ENCODE measurements at regions of chr2 and their contacts with region 1.

Region 1: GRCh38 chr2:217934321-217935131 is 68.3 kb downstream of the TNS1 start:
- DNase-seq: no peak
- H3K4me3 ChIP-seq: no peak overlapping the region
- H3K27ac ChIP-seq: 0 out of 2 replicates have a peak overlapping the region, but pooled peaks have one; percentile 33
- H3K4me1 ChIP-seq: peaks cover 11 to 37% (median 23%) of the 10 kb centered on the region in 4 experiments
- H3K27me3 ChIP-seq: no peaks in the 10 kb centered on the region; a peak in 1 of 7 replicates
- CTCF ChIP-seq: no peak
- EP300 ChIP-seq: no peak
- POLR2A ChIP-seq: no peak
- RAD21 ChIP-seq: no peak

Region 2: GRCh38 chr2:217918308-217919024 is 16.1 kb before region 1 on chr2:
- CTCF ChIA-PET with region 1: interaction called, 82 read pairs
- POLR2A ChIA-PET with region 1: interaction called, 8 read pairs
- DNase-seq: no peak
- H3K4me3 ChIP-seq: no peak overlapping the region
- H3K27ac ChIP-seq: no peak overlapping the region
- H3K4me1 ChIP-seq: peaks cover 9 to 48% (median 33%) of the 10 kb centered on the region in 4 experiments
- H3K27me3 ChIP-seq: peaks cover 0 to 4% (median 0%) of the 10 kb centered on the region in 4 experiments; a peak in 3 of 7 replicates
- CTCF ChIP-seq: peak; percentile 53 to 63 (median 55)
- EP300 ChIP-seq: no peak
- POLR2A ChIP-seq: no peak
- RAD21 ChIP-seq: peak in 1 of 2 experiments; percentile 45; a peak in 3 of 4 replicates

Region 3: DNA sequence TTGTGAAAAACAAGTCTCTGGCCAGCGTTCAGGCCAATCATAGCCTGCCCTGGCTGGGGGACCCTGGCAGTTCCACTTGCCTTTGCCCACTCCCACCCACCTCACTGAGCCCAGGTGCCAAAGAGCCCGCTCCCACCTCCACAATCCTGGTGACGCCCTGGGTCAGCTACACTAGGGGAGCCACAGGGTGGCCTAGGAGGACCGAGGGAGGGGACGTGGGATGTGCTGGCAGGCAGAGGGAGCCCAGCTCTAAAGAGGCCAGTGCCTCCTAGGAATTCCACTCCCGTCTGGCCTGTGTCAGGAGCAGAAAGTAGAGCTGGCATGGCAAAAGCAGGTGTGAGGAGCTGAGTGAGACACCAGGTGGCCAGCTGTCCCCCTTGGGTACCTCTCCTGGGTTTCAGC is 19.0 kb after region 1 on chr2:
- CTCF ChIA-PET with region 1: interaction called, 83 read pairs
- POLR2A ChIA-PET with region 1: interaction called, 6 read pairs
- DNase-seq: no peak
- H3K4me3 ChIP-seq: no peak overlapping the region
- H3K27ac ChIP-seq: no peak overlapping the region
- H3K4me1 ChIP-seq: peaks cover 0 to 10% (median 3%) of the 10 kb centered on the region in 4 experiments; a peak in 6 of 7 replicates
- H3K27me3 ChIP-seq: peaks cover 0 to 3% (median 0%) of the 10 kb centered on the region in 4 experiments; a peak in 1 of 7 replicates
- CTCF ChIP-seq: no peak
- EP300 ChIP-seq: no peak
- POLR2A ChIP-seq: no peak
- RAD21 ChIP-seq: no peak

Region 4: GRCh38 chr2:217964275-217965161 is 30.0 kb after region 1 on chr2:
- CTCF ChIA-PET with region 1: interaction called, 16 read pairs
- POLR2A ChIA-PET with region 1: no interaction called
- DNase-seq: no peak
- H3K4me3 ChIP-seq: no peak overlapping the region
- H3K27ac ChIP-seq: no peak overlapping the region; the same call in 1 of the 2 replicates
- H3K4me1 ChIP-seq: peaks cover 0 to 13% (median 8%) of the 10 kb centered on the region in 4 experiments; a peak in 6 of 7 replicates
- H3K27me3 ChIP-seq: no peaks in the 10 kb centered on the region
- CTCF ChIP-seq: no peak
- EP300 ChIP-seq: no peak
- POLR2A ChIP-seq: no peak
- RAD21 ChIP-seq: no peak; a peak in 1 of 4 replicates

Region 5: DNA sequence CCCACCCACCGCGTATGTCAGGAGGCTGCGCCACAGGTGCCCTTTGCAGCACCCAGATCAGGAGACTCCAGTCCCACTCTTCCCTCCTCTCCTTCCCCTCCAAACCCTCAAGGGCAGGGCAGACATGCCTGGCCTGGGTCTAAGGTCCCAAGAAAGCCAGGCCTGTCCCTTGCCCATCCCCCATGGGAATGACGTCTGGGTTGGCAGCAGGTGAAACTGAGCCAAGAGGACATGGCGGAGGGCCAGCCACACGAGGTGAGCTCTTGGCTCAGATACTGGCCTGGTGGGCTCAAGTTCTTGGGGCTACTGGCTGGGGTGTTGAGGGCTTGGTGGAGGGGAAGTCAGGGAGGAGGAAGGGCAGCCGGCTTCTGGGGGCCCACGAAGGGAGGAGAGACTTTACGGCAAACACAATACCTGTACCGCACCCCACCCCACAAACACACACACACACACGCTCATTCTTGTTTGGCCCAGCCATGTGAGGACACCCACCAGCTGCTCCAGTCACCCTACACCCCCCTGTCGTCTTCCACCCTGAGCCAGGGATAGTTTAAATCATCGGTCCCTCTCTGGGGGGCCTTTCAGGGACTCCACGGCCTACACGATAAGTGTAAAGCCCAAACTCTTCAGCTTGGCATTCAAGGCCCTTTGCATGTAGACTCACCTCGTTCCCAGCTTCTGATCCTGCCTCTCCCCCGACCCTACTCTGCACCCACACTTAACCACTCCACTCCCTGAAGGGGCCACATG is 92.3 kb after region 1 on chr2:
- CTCF ChIA-PET with region 1: interaction called, 10 read pairs
- POLR2A ChIA-PET with region 1: no interaction called
- DNase-seq: peak in 1 of 2 experiments; percentile 44
- H3K4me3 ChIP-seq: no peak overlapping the region
- H3K27ac ChIP-seq: no peak overlapping the region
- H3K4me1 ChIP-seq: peaks cover 0 to 12% (median 3%) of the 10 kb centered on the region in 4 experiments; a peak in 6 of 7 replicates
- H3K27me3 ChIP-seq: no peaks in the 10 kb centered on the region; a peak in 1 of 7 replicates
- CTCF ChIP-seq: no peak
- EP300 ChIP-seq: no peak
- POLR2A ChIP-seq: no peak
- RAD21 ChIP-seq: no peak

Region 6: DNA sequence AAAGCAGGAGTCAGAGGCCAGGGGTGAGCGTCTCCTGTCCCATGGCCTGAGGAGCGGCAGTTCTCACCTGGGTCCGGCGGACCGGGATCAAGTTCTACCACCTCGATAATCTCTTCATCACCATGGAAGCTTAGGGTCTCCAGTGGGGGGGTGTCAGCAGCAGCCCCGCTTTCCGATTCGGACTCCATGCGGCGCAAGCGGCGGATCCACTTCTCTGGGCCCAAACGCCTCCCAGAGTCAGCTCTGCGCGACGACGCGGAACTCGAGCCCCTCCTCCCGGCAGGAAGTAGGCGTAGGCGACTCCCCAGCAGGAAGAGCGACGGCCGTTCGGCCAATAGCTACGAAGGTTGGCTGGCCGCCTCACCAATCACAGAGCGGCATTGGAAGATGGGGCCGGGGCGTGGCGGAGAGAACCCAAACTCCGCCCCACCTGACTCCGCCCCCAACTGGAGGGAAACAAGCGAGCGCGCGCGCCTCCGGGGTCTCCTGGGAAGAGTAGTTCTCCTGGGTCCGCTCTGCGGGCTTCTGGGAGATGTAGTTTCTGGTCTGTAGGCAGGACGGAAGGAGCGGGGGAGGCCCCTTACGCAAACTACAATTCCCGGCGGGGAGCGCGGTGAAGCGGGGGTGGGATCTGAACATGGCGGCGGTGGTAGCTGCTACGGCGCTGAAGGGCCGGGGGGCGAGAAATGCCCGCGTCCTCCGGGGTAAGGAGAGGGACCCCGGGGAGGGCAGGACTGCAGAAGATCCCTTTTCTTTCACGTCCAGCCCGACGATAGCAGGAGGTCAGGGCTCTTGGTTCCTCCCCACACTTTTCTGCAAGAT is 335.6 kb after region 1 on chr2 and contains the starts of genes AAMP and PNKD:
- CTCF ChIA-PET with region 1: no interaction called
- POLR2A ChIA-PET with region 1: no interaction called
- DNase-seq: peak; percentile 97 to 100
- H3K4me3 ChIP-seq: peak within 1 kb of the TSS; percentile 89 to 95 (median 92)
- H3K27ac ChIP-seq: peak within 1 kb of the TSS; percentile 28; the same call in 1 of the 2 replicates
- H3K4me1 ChIP-seq: peaks cover 0 to 7% (median 4%) of the 10 kb centered on the region in 4 experiments; a peak in 4 of 7 replicates
- H3K27me3 ChIP-seq: no peaks in the 10 kb centered on the region
- CTCF ChIP-seq: no peak
- EP300 ChIP-seq: no peak
- POLR2A ChIP-seq: peak in 1 of 2 experiments; percentile 82; a peak in 2 of 3 replicates
- RAD21 ChIP-seq: no peak
- total RNA-seq, gene AAMP: 119 and 125 TPM in 2 replicates
- total RNA-seq, gene PNKD: 43.9 and 44.4 TPM in 2 replicates

Measured in H1 (cell line).